Activated CD4-positive, alpha-beta T cell treated with anti-CD3 and anti-CD28 coated beads, Interleukin-2, amount 10 ng/mL, durations not matched to agents 24 days and 14 days (primary cell): ENCODE measurements at regions of chr16 and their contacts with region 1.

Region 1: DNA sequence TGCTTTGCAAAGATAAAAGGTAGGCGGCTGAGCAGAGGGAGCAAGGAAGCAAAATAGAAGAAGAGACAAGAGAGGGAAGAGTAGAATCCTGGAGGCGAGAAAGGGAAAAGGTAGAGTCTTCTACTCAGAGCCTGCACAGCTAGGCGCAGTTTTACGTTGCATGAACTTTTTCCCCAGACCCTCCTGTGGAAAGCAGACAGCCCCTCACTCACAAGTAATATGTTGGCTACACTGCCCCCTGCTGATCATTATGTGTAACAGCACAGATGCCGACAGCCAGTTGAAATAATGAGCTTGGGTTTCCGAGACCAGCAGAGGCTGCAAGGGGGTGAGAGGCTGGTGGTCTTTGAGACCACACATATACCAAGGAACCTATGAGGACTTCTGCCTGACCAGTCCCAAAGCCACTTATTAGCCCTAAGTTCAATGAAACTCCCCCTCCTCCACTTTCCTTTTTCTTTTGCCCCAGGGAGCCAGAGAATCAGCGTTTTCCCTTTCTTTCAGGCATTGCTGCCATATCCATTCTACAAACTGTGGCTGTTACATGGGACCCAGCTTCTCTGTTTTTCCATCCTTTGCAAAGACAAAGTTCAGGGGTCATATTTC is 22.5 kb upstream of the CMTR2 start:
- DNase-seq: peak; percentile 74
- H3K4me3 Mint-ChIP-seq: no peak overlapping the region
- H3K27ac Mint-ChIP-seq: no peak overlapping the region
- H3K4me1 Mint-ChIP-seq: no peaks in the 10 kb centered on the region
- H3K27me3 Mint-ChIP-seq: peaks cover 10% of the 10 kb centered on the region

Region 2: DNA sequence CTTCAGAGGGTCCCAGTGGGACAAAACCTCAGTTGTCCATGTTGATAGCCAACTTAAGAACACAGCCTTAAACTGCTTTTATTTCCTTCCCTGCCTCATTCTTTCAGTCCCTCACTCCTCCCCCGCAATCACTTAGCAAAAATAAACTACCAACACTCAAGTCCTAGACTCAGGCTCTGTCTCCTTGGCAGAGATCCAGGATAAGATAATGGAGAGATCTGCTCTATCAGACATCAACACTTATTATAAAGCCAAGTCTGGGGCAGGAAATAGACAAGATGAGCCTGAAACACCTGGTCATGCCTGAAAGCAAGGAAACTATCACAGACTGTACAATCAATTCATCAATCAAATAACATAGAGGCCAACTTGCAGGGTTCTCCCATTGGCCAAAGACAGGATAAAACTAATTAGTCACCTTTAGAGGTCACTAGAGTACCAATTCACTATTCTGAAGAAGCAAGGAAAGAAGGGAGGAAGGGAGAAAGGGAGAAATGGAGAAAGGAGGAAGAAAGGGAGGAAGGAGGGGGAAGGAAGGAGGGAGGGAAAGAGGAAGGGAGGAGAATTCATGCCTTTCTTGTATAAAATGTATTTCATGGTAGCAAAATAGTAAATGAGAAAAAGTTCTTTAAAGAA is 96.8 kb before region 1 on chr16:
- intact Hi-C with region 1: loop called (anchors 5 kb)
- DNase-seq: no peak
- H3K4me3 Mint-ChIP-seq: no peak overlapping the region
- H3K27ac Mint-ChIP-seq: no peak overlapping the region
- H3K4me1 Mint-ChIP-seq: no peaks in the 10 kb centered on the region
- H3K27me3 Mint-ChIP-seq: peaks cover 3% of the 10 kb centered on the region

Region 3: GRCh38 chr16:71645453-71645852 is 333.8 kb after region 1 on chr16:
- intact Hi-C with region 1: no loop called
- DNase-seq: no peak
- H3K4me3 Mint-ChIP-seq: no peak overlapping the region
- H3K27ac Mint-ChIP-seq: no peak overlapping the region
- H3K4me1 Mint-ChIP-seq: no peaks in the 10 kb centered on the region
- H3K27me3 Mint-ChIP-seq: no peaks in the 10 kb centered on the region